ENCODE measurements at regions of chr3 and their contacts with region 1.

Region 1: GRCh38 chr3:126474498-126475412 is 936 bp downstream of the ZXDC start:
- DNase-seq: peak; percentile 16
- H3K4me3 ChIP-seq: peak overlapping the region; percentile 69 to 71
- H3K27ac ChIP-seq: peak overlapping the region; percentile 86 to 92
- H3K4me1 ChIP-seq: peaks cover 15% of the 10 kb centered on the region
- H3K27me3 ChIP-seq: no peaks in the 10 kb centered on the region
- CTCF ChIP-seq: no peak
- POLR2A ChIP-seq: peak; percentile 21

Region 2: GRCh38 chr3:126259411-126260391 is 215.1 kb before region 1 on chr3:
- intact Hi-C with region 1: loop called (anchors 5 kb)
- DNase-seq: no peak
- H3K4me3 ChIP-seq: no peak overlapping the region
- H3K27ac ChIP-seq: no peak overlapping the region
- H3K4me1 ChIP-seq: no peaks in the 10 kb centered on the region
- H3K27me3 ChIP-seq: no peaks in the 10 kb centered on the region
- CTCF ChIP-seq: peak; percentile 13 to 77 (median 63)
- POLR2A ChIP-seq: no peak

Region 3: GRCh38 chr3:126540342-126540849 is 65.6 kb after region 1 on chr3:
- intact Hi-C with region 1: no loop called
- DNase-seq: no peak
- H3K4me3 ChIP-seq: no peak overlapping the region
- H3K27ac ChIP-seq: no peak overlapping the region
- H3K4me1 ChIP-seq: no peaks in the 10 kb centered on the region
- H3K27me3 ChIP-seq: peaks cover 16% of the 10 kb centered on the region
- CTCF ChIP-seq: no peak
- POLR2A ChIP-seq: no peak

Region 4: GRCh38 chr3:126630020-126630419 is 155.3 kb after region 1 on chr3:
- intact Hi-C with region 1: no loop called
- DNase-seq: no peak
- H3K4me3 ChIP-seq: no peak overlapping the region
- H3K27ac ChIP-seq: no peak overlapping the region
- H3K4me1 ChIP-seq: no peaks in the 10 kb centered on the region
- H3K27me3 ChIP-seq: no peaks in the 10 kb centered on the region
- CTCF ChIP-seq: no peak
- POLR2A ChIP-seq: no peak